GM10248 (cell line): ENCODE measurements at regions of chr1 and their contacts with region 1.

Region 1: GRCh38 chr1:209850342-209850979 is 22.7 kb downstream of the UTP25 start:
- DNase-seq: peak; percentile 55
- CTCF ChIP-seq: peak; percentile 62

Region 2: GRCh38 chr1:209839875-209840491 is 10.5 kb before region 1 on chr1:
- CTCF ChIA-PET with region 1: interaction called, 89 read pairs
- POLR2A ChIA-PET with region 1: no interaction called
- DNase-seq: no peak
- CTCF ChIP-seq: no peak

Region 3: DNA sequence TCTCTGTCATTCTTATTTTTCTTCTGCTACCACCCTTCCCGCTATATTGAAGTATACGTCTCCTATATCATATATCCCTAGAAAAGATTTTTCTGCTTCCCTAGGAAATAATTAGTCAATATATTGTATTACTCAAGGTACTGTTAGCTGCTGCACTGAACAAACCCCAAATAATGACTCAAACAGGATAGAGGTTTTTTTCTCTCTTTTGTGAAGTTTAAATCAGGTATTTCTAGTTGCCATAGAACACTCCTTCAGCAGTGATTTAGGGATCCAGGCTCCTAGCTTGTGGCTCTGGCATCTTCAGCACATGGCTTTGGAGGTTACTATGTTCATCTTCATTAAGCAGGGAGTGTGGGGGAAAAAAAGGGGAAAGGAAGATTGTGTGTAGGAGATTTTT is 105.7 kb after region 1 on chr1:
- CTCF ChIA-PET with region 1: no interaction called
- POLR2A ChIA-PET with region 1: no interaction called
- DNase-seq: no peak
- CTCF ChIP-seq: no peak